Activated CD8-positive, alpha-beta T cell treated with anti-CD3 and anti-CD28 coated beads for 36 hours (primary cell): ENCODE measurements at regions of chr3 and their contacts with region 1.

Region 1: DNA sequence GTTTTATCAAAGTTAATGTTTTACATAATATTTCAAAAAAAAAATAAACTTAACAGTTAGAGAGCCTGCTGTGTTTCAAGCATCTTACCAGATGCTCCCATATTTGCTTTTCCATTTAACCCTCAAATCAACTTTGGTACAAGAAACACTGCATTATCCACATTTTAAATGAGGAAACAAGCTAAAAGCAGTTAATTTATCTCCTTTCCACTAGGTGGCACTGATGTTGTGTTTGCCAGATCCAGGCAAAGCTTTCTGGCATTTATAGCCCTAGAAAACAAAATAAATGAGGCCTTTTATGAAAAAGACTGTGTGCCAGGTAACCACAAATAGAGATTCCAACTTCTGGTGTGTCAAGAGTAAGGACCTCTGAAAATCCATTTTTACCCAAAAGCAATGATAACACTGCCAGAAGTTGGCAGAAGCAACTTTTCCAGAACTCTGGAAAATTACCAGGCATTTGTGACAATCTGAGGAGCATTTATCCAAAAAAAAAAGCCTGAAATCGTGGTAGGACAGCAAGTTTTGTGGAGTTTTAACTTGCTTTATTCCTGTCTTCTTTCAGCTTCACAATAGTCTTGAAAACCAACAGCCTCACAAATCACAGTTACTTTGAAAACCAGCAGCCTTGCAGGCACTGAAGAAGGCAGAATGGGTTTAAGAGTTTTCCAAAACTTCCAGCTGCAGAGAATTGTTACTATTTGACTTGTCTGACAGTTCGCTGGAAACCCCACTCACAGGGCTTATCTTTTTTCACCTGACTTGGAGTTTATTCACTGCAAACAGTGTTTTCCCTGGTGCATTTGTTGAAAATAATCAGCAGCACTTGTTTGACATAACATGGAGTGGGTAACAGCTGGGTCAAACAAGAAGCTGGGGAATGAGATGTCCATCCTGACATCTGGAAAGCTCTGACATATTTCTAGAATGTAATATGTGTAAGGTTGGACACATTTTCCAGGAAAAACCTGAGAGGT is 9.2 kb downstream of the FAM162A start:
- DNase-seq: no peak
- ATAC-seq: peak; percentile 63
- H3K4me3 Mint-ChIP-seq: no peak overlapping the region
- H3K27ac Mint-ChIP-seq: no peak overlapping the region
- H3K4me1 Mint-ChIP-seq: peaks cover 53% of the 10 kb centered on the region
- H3K27me3 Mint-ChIP-seq: no peaks in the 10 kb centered on the region
- CTCF ChIP-seq: peak; percentile 85

Region 2: GRCh38 chr3:122406198-122406597 is 13.0 kb after region 1 on chr3:
- CTCF ChIA-PET with region 1: interaction called, 19 read pairs
- POLR2A ChIA-PET with region 1: interaction called, 3 read pairs
- intact Hi-C with region 1: no loop called
- DNase-seq: peak; percentile 38
- ATAC-seq: peak; percentile 64
- H3K4me3 Mint-ChIP-seq: no peak overlapping the region
- H3K27ac Mint-ChIP-seq: peak overlapping the region; percentile 79
- H3K4me1 Mint-ChIP-seq: peaks cover 35% of the 10 kb centered on the region
- H3K27me3 Mint-ChIP-seq: no peaks in the 10 kb centered on the region
- CTCF ChIP-seq: no peak

Region 3: GRCh38 chr3:122415720-122416654 is 22.8 kb after region 1 on chr3 and contains the start of gene WDR5B:
- CTCF ChIA-PET with region 1: interaction called, 21 read pairs
- POLR2A ChIA-PET with region 1: interaction called, 3 read pairs
- intact Hi-C with region 1: no loop called
- DNase-seq: peak; percentile 99
- ATAC-seq: peak; percentile 90
- H3K4me3 Mint-ChIP-seq: peak within 1 kb of the TSS; percentile 97
- H3K27ac Mint-ChIP-seq: peak within 1 kb of the TSS; percentile 98
- H3K4me1 Mint-ChIP-seq: peaks cover 46% of the 10 kb centered on the region
- H3K27me3 Mint-ChIP-seq: no peaks in the 10 kb centered on the region
- CTCF ChIP-seq: no peak
- total RNA-seq, gene WDR5B: 3.2 to 3.4 TPM